Vagina (tissue), 2 donors: ENCODE measurements at regions of chr1 and their contacts with region 1.

Region 1: DNA sequence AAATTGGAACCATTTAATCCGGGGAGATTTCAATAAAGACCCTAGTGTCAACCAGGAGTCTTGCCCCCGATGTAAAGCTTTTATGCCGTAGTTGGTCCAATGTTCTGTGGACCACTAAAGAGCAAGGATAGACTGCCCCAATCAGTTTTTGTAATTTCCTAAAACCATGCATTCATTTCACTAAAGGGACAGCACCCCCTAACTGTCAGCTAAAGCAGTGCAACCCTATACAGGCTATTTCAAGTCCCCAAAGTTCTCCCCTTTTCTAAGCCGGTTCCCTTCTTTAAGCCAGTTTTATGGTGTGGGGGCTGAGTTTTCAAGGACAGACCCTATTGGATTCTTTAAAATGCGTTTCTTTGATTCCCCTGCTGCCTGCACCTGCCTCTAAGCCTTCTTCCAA is 12.7 kb upstream of the PDPN start:
- DNase-seq: no peak
- H3K4me3 ChIP-seq: no peak overlapping the region
- H3K27ac ChIP-seq: no peak overlapping the region
- H3K4me1 ChIP-seq: no peaks in the 10 kb centered on the region
- H3K27me3 ChIP-seq: no peaks in the 10 kb centered on the region
- CTCF ChIP-seq: no peak
- POLR2A ChIP-seq: no peak

Region 2: DNA sequence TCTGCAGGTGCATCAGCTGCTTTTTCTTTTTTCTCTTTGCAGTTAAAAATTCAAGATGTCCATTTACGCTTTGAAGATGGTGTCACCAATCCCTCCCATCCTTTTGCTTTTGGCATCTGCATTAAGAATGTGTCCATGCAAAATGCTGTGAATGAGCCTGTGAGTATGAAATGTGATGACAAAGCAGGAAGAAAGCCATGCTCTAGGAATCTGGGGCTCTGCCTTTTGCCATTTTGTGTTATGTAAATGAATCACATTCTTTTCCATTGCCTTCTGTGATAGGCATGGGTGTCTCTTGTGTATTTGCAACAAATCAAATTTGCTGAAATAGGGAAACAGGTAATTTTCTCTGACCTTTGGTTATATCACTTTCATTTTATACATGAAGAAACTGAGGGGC is 1321.7 kb before region 1 on chr1:
- intact Hi-C with region 1: no loop called
- DNase-seq: no peak
- H3K4me3 ChIP-seq: no peak overlapping the region
- H3K27ac ChIP-seq: no peak overlapping the region
- H3K4me1 ChIP-seq: peaks cover 15% of the 10 kb centered on the region
- H3K27me3 ChIP-seq: no peaks in the 10 kb centered on the region
- CTCF ChIP-seq: no peak
- POLR2A ChIP-seq: no peak

Region 3: DNA sequence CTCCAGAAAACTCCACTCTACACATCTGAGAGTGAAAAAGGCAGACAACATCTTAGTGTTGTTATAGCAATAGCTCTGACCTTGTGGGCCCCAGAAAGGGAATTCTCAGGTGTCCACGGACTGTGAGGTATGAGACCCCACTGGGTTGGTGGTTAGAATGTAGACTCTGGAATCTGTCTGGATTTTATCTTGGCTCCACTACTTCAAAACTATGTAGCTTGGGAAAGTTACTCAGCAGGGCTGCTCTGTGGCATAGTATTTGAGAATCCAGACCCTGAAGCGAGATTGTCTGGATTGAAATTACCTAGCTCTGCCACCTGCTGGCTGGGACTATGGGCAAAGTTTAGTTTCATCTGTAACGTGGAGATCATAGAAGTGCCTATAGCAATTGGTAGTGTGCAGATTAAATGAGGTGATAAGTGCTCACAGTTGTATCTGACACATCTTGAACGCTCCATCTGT is 154.8 kb after region 1 on chr1:
- intact Hi-C with region 1: no loop called
- DNase-seq: no peak
- H3K4me3 ChIP-seq: no peak overlapping the region
- H3K27ac ChIP-seq: no peak overlapping the region
- H3K4me1 ChIP-seq: no peaks in the 10 kb centered on the region
- H3K27me3 ChIP-seq: no peaks in the 10 kb centered on the region
- CTCF ChIP-seq: peak in 2 of 3 experiments; percentile 7 to 10
- POLR2A ChIP-seq: no peak

Region 4: DNA sequence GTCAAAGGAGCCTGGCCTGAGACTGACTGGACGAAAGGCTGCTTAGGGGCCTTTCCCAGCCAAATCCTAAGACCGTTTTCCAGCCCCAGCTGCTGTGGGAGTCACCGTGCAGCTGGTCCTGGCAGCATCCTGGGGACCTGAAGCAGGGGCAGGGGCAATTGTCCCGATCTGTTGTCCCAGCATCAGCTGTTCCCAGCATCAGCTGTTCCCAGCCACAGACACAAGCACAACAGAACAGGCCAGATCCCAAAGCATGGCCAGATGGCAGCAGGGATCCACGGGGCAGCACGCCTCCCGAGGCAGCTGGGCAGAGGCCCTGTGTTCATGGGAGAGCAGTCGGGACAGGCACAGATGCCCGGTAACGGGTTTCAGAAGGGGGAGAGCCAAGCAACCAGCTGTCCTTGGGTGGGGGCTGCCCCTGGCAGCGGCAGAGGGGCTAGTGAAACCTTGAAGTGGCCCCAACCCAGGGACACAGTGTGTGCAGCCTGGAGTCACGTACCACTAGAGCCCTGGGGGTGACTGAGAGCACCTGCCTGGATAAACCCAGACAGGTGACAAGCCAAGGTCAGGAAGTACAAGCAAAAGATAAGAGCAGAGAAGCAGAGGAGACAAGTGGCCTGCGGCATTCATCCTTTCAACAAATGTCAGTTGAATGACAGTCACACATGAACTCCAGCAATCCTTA is 1918.3 kb after region 1 on chr1:
- intact Hi-C with region 1: loop called (anchors 5 kb)
- DNase-seq: no peak
- H3K4me3 ChIP-seq: no peak overlapping the region
- H3K27ac ChIP-seq: no peak overlapping the region
- H3K4me1 ChIP-seq: no peaks in the 10 kb centered on the region
- H3K27me3 ChIP-seq: no peaks in the 10 kb centered on the region
- CTCF ChIP-seq: no peak
- POLR2A ChIP-seq: no peak